Esophagus squamous epithelium (tissue), 5 donors: ENCODE measurements at regions of chr3 and their contacts with region 1.

Region 1: GRCh38 chr3:34683851-34684250 is 885.4 kb downstream of the PDCD6IP start:
- DNase-seq: no peak
- H3K4me3 ChIP-seq: no peak overlapping the region
- H3K27ac ChIP-seq: no peak overlapping the region
- H3K4me1 ChIP-seq: no peaks in the 10 kb centered on the region
- H3K27me3 ChIP-seq: no peaks in the 10 kb centered on the region
- CTCF ChIP-seq: peak in 5 of 6 experiments; percentile 37 to 60 (median 40)
- POLR2A ChIP-seq: no peak

Region 2: GRCh38 chr3:33883538-33883950 is 800.3 kb before region 1 on chr3:
- intact Hi-C with region 1: loop called (anchors 10 kb)
- DNase-seq: no peak
- H3K4me3 ChIP-seq: peak overlapping the region in 1 of 4 donors; percentile 40
- H3K27ac ChIP-seq: no peak overlapping the region
- H3K4me1 ChIP-seq: peaks cover 0 to 6% (median 3%) of the 10 kb centered on the region in 3 donors
- H3K27me3 ChIP-seq: no peaks in the 10 kb centered on the region
- CTCF ChIP-seq: peak; percentile 45 to 88 (median 82)
- POLR2A ChIP-seq: no peak

Region 3: DNA sequence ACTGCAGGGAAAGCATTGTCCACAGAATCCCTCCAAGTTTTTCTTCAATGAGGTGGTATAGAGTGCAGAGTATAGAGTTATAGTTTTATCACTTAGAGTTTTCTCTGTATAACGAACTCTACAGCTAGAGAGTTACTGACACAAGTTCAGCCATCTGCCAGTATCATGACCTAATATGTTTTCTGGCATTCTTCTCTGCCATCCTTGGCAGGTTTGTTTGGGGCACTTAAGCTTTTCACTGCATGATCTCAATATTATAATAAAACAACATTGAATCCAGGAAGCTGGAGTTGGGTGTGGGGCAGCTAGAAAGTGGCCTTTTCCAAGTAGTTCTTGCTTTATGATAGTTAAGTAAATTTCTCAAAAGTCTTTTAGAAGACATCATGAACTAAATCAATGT is 212.0 kb after region 1 on chr3:
- intact Hi-C with region 1: no loop called
- DNase-seq: no peak
- H3K4me3 ChIP-seq: no peak overlapping the region
- H3K27ac ChIP-seq: no peak overlapping the region
- H3K4me1 ChIP-seq: no peaks in the 10 kb centered on the region
- H3K27me3 ChIP-seq: no peaks in the 10 kb centered on the region
- CTCF ChIP-seq: no peak
- POLR2A ChIP-seq: no peak